RWPE1 (cell line): ENCODE measurements at regions of chr4 and their contacts with region 1.

Region 1: DNA sequence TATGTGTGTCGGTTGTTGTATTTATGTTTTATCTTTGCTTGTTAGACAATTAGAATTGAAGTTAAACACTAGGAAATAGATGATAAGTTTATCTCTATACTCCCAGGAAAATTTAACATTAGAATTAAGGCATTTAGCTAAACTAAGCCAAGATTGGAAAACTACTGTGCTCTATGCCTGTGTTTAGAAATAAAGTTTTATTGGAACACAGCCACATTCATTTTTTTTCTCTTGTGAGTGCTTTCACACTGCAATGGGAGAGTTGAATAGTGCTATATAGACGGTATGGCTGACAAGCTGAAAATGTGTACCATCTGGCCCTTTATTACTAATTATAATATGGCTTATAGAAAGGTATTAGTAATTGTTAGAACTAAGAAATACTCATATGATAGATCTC is 186.7 kb upstream of the NUDT6 start:
- DNase-seq: no peak
- H3K27ac ChIP-seq: no peak overlapping the region
- CTCF ChIP-seq: no peak

Region 2: GRCh38 chr4:123083646-123084045 is 25.5 kb before region 1 on chr4:
- CTCF ChIA-PET with region 1: no interaction called
- POLR2A ChIA-PET with region 1: no interaction called
- DNase-seq: no peak
- H3K27ac ChIP-seq: no peak overlapping the region
- CTCF ChIP-seq: no peak

Region 3: GRCh38 chr4:123127218-123127617 is 18.1 kb after region 1 on chr4:
- CTCF ChIA-PET with region 1: no interaction called
- POLR2A ChIA-PET with region 1: no interaction called
- DNase-seq: no peak
- H3K27ac ChIP-seq: no peak overlapping the region
- CTCF ChIP-seq: peak; percentile 39

Region 4: DNA sequence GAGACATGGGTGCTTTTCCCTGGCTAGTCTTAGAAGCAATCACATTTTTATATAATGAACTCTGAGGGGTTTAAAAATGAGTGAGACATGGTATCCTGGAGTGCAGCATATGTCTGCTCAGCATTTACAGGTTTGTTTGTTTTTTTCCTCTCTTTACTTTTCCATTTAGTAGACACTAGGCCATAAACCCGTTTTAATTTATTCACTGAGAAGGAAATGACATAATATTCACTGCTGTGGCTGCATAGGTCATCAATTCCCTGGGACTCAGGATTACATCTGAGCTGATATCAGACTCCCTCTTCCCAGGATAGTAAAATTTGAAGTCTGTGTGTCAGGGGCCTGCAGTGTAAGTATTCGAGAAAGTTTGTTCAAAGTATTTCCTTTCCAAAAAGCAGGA is 108.5 kb after region 1 on chr4:
- CTCF ChIA-PET with region 1: no interaction called
- POLR2A ChIA-PET with region 1: interaction called, 14 read pairs
- DNase-seq: no peak
- H3K27ac ChIP-seq: no peak overlapping the region
- CTCF ChIP-seq: no peak